Breast epithelium (tissue), 4 donors: ENCODE measurements at regions of chr14 and their contacts with region 1.

Region 1: DNA sequence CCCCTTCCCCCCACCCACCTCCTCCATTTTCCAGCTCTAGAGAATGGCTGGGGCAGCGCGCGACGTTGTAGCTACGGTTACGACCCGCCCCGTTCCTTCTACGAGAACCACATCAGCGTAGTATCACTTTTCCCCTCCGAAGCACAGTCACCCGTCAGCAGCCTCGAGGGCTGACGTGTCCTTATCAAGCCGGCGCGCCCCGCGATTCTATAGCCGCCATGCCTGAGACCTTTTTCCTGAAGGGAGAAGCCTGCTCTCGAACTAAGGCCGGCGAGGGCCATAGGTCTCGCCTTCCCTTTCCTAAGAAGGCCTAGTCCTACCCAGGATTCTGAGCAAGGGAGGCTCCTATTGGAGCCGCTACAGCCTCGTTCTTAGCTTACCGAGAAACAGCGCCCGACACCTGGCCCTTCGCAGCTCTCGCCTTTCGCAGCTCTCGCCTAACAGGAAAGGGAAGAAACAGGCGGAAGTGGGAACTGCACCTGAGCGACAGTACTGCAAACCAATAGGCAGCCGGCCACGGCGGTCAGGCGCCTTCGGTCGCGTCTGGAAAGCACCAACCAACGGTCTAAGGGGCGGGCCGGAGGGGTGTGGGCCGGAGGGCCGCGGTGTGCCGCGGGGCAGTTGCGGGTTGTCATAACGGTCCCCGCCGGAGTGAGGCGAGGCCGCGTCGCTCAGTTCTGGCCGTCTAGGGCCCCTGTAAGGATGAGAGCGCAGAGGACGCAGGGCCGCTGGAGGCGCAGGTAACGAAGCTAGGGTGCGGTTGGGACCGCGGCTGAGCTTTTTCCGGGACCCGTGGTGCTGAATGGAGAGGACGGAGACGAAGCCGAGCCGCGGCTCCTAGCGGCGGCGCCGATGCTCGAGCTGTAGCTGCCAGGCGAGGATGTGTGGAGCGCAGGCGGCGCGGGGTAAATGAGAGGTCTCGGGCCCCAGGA is at the starts of genes MGAT2 and RPL36AL:
- DNase-seq: peak; percentile 96 to 97
- H3K4me3 ChIP-seq: peak within 1 kb of the TSS; percentile 80 to 89 (median 80)
- H3K27ac ChIP-seq: peak within 1 kb of the TSS; percentile 91 to 92
- H3K4me1 ChIP-seq: peaks cover 4 to 6% of the 10 kb centered on the region in 2 donors
- H3K27me3 ChIP-seq: no peaks in the 10 kb centered on the region
- CTCF ChIP-seq: peak; percentile 47 to 83 (median 74)
- POLR2A ChIP-seq: peak; percentile 92
- total RNA-seq, gene MGAT2: 21.6 to 24.9 (median 22.1) TPM
- total RNA-seq, gene RPL36AL: 161 to 303 (median 269) TPM

Region 2: GRCh38 chr14:49767562-49768300 is 147.3 kb after region 1 on chr14 and contains the start of gene KLHDC2:
- intact Hi-C with region 1: loop called (anchors 5 kb)
- DNase-seq: peak; percentile 83 to 87
- H3K4me3 ChIP-seq: peak within 1 kb of the TSS; percentile 81 to 98 (median 97)
- H3K27ac ChIP-seq: peak within 1 kb of the TSS; percentile 93 to 98
- H3K4me1 ChIP-seq: no peaks in the 10 kb centered on the region
- H3K27me3 ChIP-seq: no peaks in the 10 kb centered on the region
- CTCF ChIP-seq: peak in 1 of 3 donors; percentile 29
- POLR2A ChIP-seq: peak; percentile 32
- total RNA-seq, gene KLHDC2: 74.4 to 107 (median 88.5) TPM

Region 3: DNA sequence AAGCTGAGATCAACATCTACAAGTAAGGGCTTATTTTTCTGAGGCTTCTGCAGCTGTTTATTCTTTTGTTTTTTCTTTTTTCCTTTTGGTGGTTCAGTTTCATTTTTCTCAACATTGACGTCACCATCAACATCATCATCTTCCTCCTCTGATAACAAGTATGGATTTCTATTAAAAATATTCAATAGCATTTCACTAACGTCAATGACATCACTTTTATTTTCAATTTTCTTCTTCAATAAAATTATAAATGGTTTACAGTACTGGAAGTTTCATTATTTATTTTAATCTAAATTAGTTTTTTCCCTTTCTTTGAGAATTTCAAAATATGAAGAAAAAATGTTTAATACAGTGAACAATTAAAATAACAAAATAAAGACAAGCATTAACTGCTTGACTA is 208.2 kb after region 1 on chr14:
- intact Hi-C with region 1: loop called (anchors 10 kb)
- DNase-seq: no peak
- H3K4me3 ChIP-seq: no peak overlapping the region
- H3K27ac ChIP-seq: no peak overlapping the region
- H3K4me1 ChIP-seq: no peaks in the 10 kb centered on the region
- H3K27me3 ChIP-seq: no peaks in the 10 kb centered on the region
- CTCF ChIP-seq: no peak
- POLR2A ChIP-seq: no peak